Activated CD8-positive, alpha-beta T cell treated with anti-CD3 and anti-CD28 coated beads for 36 hours (primary cell): ENCODE measurements at regions of chr1 and their contacts with region 1.

Region 1: GRCh38 chr1:247373721-247374141 is 42.1 kb upstream of the ZNF496 start:
- DNase-seq: peak; percentile 80
- ATAC-seq: peak; percentile 82
- H3K4me3 Mint-ChIP-seq: peak overlapping the region; percentile 38
- H3K27ac Mint-ChIP-seq: no peak overlapping the region
- H3K4me1 Mint-ChIP-seq: peaks cover 6% of the 10 kb centered on the region
- H3K27me3 Mint-ChIP-seq: no peaks in the 10 kb centered on the region
- CTCF ChIP-seq: peak; percentile 49

Region 2: DNA sequence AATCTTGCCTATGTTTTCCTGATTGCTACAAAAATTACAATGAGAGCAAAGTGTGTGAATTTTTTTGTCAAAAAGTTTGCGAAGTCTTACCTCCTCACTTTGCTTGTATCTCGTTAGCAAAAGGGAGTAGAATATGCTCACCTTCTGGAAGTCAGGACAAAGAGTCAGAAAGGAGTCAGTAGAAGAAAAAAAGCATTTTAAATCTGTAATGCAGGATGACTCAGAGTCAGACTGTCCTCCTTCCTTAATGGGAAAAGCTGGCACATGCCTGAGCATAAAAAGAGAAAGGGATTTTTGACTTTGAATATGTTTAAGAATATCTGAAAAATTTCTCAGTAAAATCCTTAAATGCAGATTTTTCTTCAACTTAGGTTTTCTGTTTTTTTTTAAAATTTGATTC is 132.0 kb before region 1 on chr1:
- CTCF ChIA-PET with region 1: no interaction called
- POLR2A ChIA-PET with region 1: no interaction called
- intact Hi-C with region 1: no loop called
- DNase-seq: no peak
- ATAC-seq: no peak
- H3K4me3 Mint-ChIP-seq: no peak overlapping the region
- H3K27ac Mint-ChIP-seq: no peak overlapping the region
- H3K4me1 Mint-ChIP-seq: no peaks in the 10 kb centered on the region
- H3K27me3 Mint-ChIP-seq: no peaks in the 10 kb centered on the region
- CTCF ChIP-seq: no peak

Region 3: DNA sequence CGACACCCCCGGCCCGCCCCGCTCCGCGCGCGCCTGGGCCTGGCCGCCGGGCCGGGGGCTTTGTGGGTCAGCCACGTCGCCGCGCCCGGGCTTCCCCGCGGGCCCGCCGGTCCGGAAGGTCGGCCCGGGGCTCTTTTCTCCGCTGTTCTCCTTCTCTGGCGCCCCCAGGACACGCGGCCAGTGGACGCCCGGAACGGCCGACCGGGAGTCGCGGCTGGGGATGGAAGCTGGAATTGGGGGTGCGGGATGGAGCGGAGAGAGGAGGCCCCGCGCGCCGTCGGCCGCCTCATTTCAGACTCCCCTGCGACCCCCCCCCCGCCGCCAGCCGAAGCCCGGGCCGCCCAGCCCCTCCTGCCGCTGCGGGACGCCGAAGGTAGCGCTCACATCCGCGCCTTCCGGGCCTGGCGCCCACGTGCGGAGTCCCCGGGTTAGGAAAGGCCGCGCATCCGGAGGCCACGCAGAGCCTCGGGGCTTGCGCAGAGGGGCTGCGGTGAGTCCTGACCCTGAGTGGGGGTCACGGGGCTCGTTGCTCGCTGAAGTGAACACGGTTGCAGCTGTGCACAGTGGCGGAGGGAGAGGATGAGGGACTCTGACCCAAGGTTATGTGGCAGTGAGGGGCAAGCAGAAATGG is 41.6 kb before region 1 on chr1:
- CTCF ChIA-PET with region 1: interaction called, 10 read pairs
- POLR2A ChIA-PET with region 1: interaction called, 3 read pairs
- intact Hi-C with region 1: no loop called
- DNase-seq: peak; percentile 82
- ATAC-seq: peak; percentile 61
- H3K4me3 Mint-ChIP-seq: peak overlapping the region; percentile 86
- H3K27ac Mint-ChIP-seq: peak overlapping the region; percentile 87
- H3K4me1 Mint-ChIP-seq: peaks cover 73% of the 10 kb centered on the region
- H3K27me3 Mint-ChIP-seq: no peaks in the 10 kb centered on the region
- CTCF ChIP-seq: no peak